Activated CD4-positive, alpha-beta T cell treated with anti-CD3 and anti-CD28 coated beads, Interleukin-2, amount 10 ng/mL, durations not matched to agents 24 days and 14 days (primary cell): ENCODE measurements at regions of chrX and their contacts with region 1.

Region 1: GRCh38 chrX:58025979-58026378 is 115.7 kb upstream of the ZXDA start:
- DNase-seq: peak; percentile 66
- H3K4me3 Mint-ChIP-seq: no peak overlapping the region
- H3K27ac Mint-ChIP-seq: no peak overlapping the region
- H3K4me1 Mint-ChIP-seq: no peaks in the 10 kb centered on the region
- H3K27me3 Mint-ChIP-seq: no peaks in the 10 kb centered on the region

Region 2: GRCh38 chrX:57821703-57822375 is 204.1 kb before region 1 on chrX:
- intact Hi-C with region 1: loop called (anchors 1 kb)
- DNase-seq: peak; percentile 77
- H3K4me3 Mint-ChIP-seq: no peak overlapping the region
- H3K27ac Mint-ChIP-seq: no peak overlapping the region
- H3K4me1 Mint-ChIP-seq: no peaks in the 10 kb centered on the region
- H3K27me3 Mint-ChIP-seq: no peaks in the 10 kb centered on the region

Region 3: GRCh38 chrX:57964975-57965374 is 61.0 kb before region 1 on chrX:
- intact Hi-C with region 1: no loop called
- DNase-seq: no peak
- H3K4me3 Mint-ChIP-seq: no peak overlapping the region
- H3K27ac Mint-ChIP-seq: no peak overlapping the region
- H3K4me1 Mint-ChIP-seq: no peaks in the 10 kb centered on the region
- H3K27me3 Mint-ChIP-seq: no peaks in the 10 kb centered on the region

Region 4: GRCh38 chrX:58044144-58044543 is 18.2 kb after region 1 on chrX:
- intact Hi-C with region 1: no loop called
- DNase-seq: no peak
- H3K4me3 Mint-ChIP-seq: no peak overlapping the region
- H3K27ac Mint-ChIP-seq: no peak overlapping the region
- H3K4me1 Mint-ChIP-seq: no peaks in the 10 kb centered on the region
- H3K27me3 Mint-ChIP-seq: no peaks in the 10 kb centered on the region